HCT116 (cell line): ENCODE measurements at regions of chr6 and their contacts with region 1.

Region 1: DNA sequence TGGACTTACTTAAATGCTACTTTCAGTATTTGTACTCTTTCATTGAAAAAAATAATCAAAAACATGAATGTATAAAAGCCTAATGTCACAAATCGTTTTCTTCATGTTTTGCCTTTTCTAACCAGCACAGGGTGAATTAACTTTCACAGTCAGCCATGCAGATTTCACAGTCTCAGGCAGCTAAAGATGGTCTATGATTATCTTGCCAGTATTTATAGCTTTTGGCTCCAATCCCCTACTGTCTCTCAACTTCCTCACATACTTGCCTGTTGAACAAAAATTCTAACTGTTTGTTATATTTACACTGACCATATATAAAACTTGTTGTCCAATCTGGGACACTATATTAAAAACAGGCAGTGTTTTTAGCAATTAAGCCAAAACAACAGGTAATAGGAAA is 358.2 kb downstream of the ARHGAP18 start:
- DNase-seq: no peak
- ATAC-seq: no peak
- H3K4me3 ChIP-seq: no peak overlapping the region
- H3K27ac ChIP-seq: no peak overlapping the region
- H3K4me1 ChIP-seq: peaks cover 0 to 8% of the 10 kb centered on the region in 2 experiments; a peak in 1 of 4 replicates
- H3K27me3 ChIP-seq: no peaks in the 10 kb centered on the region
- CTCF ChIP-seq: no peak
- POLR2A ChIP-seq: no peak
- RAD21 ChIP-seq: no peak

Region 2: DNA sequence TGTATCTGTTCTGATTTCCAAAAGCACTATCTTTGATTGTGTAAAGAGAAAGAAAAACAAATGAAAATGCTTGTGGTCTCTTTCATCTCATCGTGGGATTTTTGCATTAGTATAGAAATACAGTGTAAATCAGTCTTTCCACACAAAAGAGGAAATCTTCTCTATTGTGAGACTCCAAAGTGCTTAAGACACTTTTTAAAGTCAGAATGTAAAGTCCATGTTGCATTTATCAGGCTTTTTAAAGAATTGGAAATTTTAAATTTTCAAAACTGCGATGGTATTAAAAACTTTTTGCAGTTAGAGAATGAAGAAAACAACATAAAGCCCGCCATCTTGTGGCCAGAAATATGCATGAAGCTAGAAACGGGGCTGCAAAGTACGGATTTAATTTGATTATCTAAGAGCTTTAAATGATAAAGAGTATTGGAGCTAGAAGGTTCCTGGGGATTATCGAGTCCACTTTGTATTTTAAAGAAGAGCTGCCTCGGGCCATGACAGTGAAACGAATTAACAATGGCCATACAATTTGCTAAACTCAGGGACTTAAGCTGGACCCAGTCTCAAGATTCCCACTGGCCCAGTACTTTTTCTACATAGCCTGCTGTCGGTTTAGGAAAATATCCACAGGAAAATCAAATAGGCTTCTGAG is 18.6 kb after region 1 on chr6:
- CTCF ChIA-PET with region 1: interaction called, 10 read pairs
- POLR2A ChIA-PET with region 1: no interaction called
- RAD21 ChIA-PET with region 1: interaction called in 1 of 2 experiments, 3 read pairs
- intact Hi-C with region 1: no loop called
- DNase-seq: peak; percentile 45
- ATAC-seq: peak; percentile 78
- H3K4me3 ChIP-seq: peak overlapping the region in 1 of 2 experiments; percentile 36; a peak in 2 of 4 replicates
- H3K27ac ChIP-seq: no peak overlapping the region
- H3K4me1 ChIP-seq: peaks cover 6 to 10% of the 10 kb centered on the region in 2 experiments; a peak in 2 of 4 replicates
- H3K27me3 ChIP-seq: no peaks in the 10 kb centered on the region
- CTCF ChIP-seq: peak; percentile 60 to 85 (median 63); a peak in 5 of 6 replicates
- POLR2A ChIP-seq: no peak
- RAD21 ChIP-seq: peak; percentile 82

Region 3: GRCh38 chr6:129448965-129449364 is 97.2 kb after region 1 on chr6:
- CTCF ChIA-PET with region 1: no interaction called
- POLR2A ChIA-PET with region 1: no interaction called
- RAD21 ChIA-PET with region 1: no interaction called
- intact Hi-C with region 1: no loop called
- DNase-seq: no peak
- ATAC-seq: no peak
- H3K4me3 ChIP-seq: no peak overlapping the region
- H3K27ac ChIP-seq: no peak overlapping the region
- H3K4me1 ChIP-seq: no peaks in the 10 kb centered on the region
- H3K27me3 ChIP-seq: no peaks in the 10 kb centered on the region
- CTCF ChIP-seq: no peak
- POLR2A ChIP-seq: no peak
- RAD21 ChIP-seq: no peak

Region 4: DNA sequence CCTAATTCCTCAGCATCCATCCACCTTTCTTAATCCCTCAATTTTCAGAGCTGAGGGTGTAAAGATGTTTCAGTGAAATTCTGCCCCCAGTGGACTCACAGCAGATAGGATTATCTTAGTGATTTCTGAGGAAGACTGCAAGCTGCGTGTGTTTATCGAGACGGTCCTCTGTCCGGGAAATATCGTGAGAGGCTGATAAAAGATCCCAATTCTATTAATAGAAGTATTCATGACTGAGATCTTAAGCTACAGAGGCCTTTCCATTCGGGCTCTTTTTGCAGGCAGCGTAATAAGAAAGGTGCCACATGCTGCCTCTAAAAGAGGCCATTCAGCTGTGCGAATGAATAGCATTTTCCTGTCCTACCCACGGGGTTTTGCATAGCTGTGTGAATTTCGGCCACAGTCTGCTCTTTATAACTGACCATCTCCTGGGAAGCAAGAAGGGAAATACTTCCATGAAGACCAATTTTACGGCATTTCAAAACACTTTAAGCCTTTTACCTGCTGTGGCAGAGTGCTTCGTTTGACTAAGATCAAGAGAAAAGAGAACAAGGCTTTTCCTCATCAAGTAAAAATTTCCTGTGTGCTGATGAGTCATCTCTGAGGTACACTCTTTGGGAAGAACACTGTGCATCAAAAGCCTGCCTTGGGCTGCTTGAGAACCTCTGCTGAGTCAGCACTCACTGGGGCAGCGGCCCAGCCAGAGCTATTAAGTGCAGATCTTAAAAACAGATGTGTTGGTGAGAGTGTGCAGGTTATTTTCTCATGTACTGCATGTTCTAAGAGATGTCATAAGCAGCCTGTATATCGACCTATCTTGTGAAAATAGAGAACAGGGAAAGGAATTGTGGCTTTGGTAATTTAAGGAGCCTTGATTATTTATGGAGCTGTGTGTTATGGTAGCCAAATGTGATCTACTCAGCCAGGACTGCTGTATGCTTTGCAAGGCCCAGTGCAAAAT is 149.4 kb after region 1 on chr6:
- CTCF ChIA-PET with region 1: no interaction called
- POLR2A ChIA-PET with region 1: no interaction called
- RAD21 ChIA-PET with region 1: no interaction called
- intact Hi-C with region 1: no loop called
- DNase-seq: peak; percentile 98
- ATAC-seq: peak; percentile 86
- H3K4me3 ChIP-seq: peak overlapping the region in 1 of 2 experiments; percentile 36; a peak in 2 of 4 replicates
- H3K27ac ChIP-seq: peak overlapping the region; percentile 97
- H3K4me1 ChIP-seq: peaks cover 59 to 67% of the 10 kb centered on the region in 2 experiments
- H3K27me3 ChIP-seq: no peaks in the 10 kb centered on the region
- CTCF ChIP-seq: peak; percentile 26 to 71 (median 57); a peak in 5 of 6 replicates
- POLR2A ChIP-seq: no peak
- RAD21 ChIP-seq: peak; percentile 25